Vagina (tissue), 2 donors: ENCODE measurements at regions of chr16 and their contacts with region 1.

Region 1: DNA sequence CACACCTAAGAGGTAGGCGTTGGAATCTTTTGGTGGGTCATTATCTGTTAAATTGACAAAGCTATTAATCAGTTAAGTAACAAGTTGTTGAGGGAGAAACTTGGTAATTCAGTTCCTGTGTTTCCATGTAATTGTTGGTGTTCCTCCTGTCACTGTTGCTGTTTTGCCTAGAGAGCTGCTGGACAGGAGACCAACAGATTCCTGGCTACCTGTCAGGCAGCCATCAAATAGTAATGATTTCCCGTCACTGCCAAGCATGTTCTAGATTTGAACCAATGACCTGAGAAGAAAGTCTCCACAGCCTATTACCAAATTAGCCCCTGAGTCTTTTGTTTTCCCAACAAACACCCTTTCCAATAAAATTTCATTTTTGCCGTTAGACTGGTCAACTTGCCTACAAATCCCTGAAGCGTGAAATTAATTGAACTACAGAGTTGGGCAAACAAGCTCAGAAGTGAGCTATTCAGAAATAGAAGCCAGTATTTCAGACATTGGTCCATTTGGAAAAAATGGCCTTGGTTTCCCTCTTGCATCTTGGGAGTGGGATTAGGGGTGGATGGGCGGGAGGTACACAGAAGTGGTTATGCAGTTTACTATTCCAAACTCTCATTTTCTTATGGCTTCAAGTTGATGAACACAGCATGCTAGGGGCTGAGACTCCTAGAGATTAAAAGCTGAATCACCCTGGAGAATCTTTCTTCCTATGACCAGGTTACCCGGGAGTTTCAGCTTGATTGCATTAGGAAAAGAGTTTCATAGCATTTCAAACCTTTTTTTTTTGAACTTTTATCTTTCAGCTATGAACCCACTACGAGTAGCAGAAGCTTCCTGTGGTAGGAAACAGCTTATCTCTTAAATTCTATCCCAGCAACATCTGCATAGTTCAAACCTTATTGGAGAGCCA is 262.8 kb upstream of the MAF start:
- DNase-seq: no peak
- H3K4me3 ChIP-seq: no peak overlapping the region
- H3K27ac ChIP-seq: no peak overlapping the region
- H3K4me1 ChIP-seq: no peaks in the 10 kb centered on the region
- H3K27me3 ChIP-seq: no peaks in the 10 kb centered on the region
- CTCF ChIP-seq: no peak
- POLR2A ChIP-seq: no peak

Region 2: GRCh38 chr16:79658301-79659033 is 204.9 kb before region 1 on chr16:
- intact Hi-C with region 1: no loop called
- DNase-seq: peak in 1 of 2 donors; percentile 96
- H3K4me3 ChIP-seq: no peak overlapping the region
- H3K27ac ChIP-seq: no peak overlapping the region
- H3K4me1 ChIP-seq: peaks cover 36% of the 10 kb centered on the region
- H3K27me3 ChIP-seq: no peaks in the 10 kb centered on the region
- CTCF ChIP-seq: no peak
- POLR2A ChIP-seq: no peak

Region 3: GRCh38 chr16:79784007-79784406 is 79.4 kb before region 1 on chr16:
- intact Hi-C with region 1: no loop called
- DNase-seq: no peak
- H3K4me3 ChIP-seq: no peak overlapping the region
- H3K27ac ChIP-seq: peak overlapping the region; percentile 28
- H3K4me1 ChIP-seq: no peaks in the 10 kb centered on the region
- H3K27me3 ChIP-seq: no peaks in the 10 kb centered on the region
- CTCF ChIP-seq: no peak
- POLR2A ChIP-seq: no peak

Region 4: DNA sequence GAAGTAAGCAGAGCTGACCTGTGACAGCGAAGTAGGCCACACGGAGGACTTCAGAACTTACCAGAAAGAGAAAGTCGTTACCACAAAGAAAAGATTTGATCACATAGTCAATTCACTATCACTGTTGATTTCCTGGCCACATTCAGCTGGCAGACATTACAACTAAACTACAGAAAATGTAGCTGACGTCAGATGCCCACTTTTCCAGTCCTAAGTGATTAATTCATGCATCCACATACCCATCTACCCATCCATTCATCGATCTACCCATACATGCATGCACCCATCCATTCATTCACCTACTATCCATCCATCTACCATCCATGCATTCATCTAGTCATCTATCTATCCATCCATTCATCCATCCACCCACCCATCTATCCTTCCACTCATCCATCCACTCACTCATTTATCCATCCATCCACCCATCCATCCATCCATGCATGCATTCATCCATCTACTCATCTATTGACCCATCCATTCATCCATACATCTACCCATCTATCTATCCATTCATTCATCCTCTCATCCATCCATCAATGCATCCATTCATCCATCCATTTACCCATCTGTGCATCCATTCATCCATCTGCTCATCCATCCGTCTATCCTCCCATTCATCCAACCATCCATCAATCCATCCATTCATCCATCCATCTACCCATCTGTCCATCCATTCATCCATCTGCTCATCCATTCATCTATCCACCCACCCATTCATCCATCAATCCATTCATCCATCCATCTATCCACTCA is 38.5 kb before region 1 on chr16:
- intact Hi-C with region 1: loop called (anchors 1 kb)
- DNase-seq: no peak
- H3K4me3 ChIP-seq: no peak overlapping the region
- H3K27ac ChIP-seq: no peak overlapping the region
- H3K4me1 ChIP-seq: peaks cover 4% of the 10 kb centered on the region
- H3K27me3 ChIP-seq: no peaks in the 10 kb centered on the region
- CTCF ChIP-seq: no peak
- POLR2A ChIP-seq: no peak

Region 5: GRCh38 chr16:80034948-80035700 is 171.7 kb after region 1 on chr16:
- intact Hi-C with region 1: no loop called
- DNase-seq: no peak
- H3K4me3 ChIP-seq: no peak overlapping the region
- H3K27ac ChIP-seq: no peak overlapping the region
- H3K4me1 ChIP-seq: no peaks in the 10 kb centered on the region
- H3K27me3 ChIP-seq: no peaks in the 10 kb centered on the region
- CTCF ChIP-seq: no peak
- POLR2A ChIP-seq: no peak

Region 6: DNA sequence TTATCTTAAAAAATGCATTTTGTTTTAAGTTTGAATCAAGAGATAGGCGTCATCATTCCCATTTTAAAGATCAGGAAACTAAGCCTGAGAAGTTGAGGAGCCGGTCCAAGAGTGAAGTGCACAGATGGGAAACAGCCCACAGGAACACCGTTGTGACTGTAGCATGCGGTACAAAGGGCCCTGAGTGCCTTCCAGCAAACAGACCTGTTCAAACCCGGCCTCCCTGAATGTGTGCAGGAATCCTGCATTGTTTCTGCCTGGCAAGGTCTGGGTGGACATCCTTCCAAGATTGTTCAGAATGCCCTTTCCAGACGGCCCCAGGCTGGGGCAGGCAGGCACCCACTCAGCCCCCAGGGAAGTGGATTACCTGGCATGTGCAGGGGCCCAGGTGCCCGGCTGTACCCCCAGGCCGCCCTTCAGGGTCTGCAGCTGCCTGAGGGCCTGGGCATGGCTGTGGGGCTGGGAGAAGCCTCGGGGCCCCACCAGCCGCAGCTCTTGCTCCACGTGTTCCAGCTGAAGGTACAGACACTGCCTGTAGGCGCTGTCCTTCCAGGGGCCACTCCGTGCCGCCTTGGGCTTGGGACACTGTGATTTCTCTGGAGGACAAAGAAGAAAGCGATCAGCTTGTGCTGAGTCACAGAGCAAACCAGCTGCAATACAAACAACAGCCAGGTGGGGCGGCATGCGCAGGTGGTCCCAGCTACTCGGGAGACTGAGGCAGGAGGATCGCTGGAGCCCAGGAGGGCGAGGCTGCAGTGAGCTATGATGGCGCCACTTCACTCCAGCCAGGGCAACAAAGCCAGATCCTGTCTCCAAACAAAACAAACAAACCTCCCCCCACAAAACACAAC is 1277.8 kb after region 1 on chr16:
- intact Hi-C with region 1: no loop called
- DNase-seq: no peak
- H3K4me3 ChIP-seq: no peak overlapping the region
- H3K27ac ChIP-seq: no peak overlapping the region
- H3K4me1 ChIP-seq: peaks cover 8% of the 10 kb centered on the region
- H3K27me3 ChIP-seq: no peaks in the 10 kb centered on the region
- CTCF ChIP-seq: no peak
- POLR2A ChIP-seq: no peak